Prostate gland (tissue), 2 donors: ENCODE measurements at regions of chr1 and their contacts with region 1.

Region 1: DNA sequence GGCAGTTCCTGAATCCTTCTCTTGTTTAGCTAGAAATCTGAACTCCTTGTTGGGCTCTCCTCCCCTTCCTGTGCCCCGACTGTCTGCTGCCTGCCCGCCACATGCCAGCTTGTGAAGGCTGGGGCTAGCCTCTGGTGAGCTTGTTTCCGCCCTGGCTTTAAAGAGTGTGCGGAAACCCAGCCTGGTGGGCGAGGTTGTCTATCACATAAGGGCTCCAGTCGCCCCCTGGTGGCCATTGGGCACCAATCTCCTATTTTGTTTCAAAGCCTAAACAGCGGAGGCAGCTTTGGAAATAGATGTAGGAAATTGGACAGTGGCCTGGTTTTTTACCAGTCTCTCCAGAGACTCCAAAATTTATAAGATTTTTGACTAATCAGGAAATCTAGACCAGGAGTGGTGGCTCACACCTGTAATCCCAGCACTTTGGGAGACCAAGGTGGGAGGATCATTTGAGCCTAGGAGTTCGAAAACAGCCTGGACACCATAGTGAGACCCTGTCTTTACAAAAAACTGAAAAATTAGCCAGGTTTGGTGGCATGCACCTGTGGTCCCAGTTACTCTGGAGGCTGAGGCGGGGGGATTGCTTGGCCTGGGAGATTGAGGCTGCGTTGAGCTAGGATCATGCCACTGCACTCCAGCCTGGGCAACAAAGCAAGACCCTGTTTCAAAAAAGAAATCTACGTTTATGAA is 9.8 kb downstream of the ATP8B2 start:
- DNase-seq: peak; percentile 84
- H3K4me3 ChIP-seq: no peak overlapping the region
- H3K27ac ChIP-seq: peak overlapping the region; percentile 72 to 96
- H3K4me1 ChIP-seq: peaks cover 8% of the 10 kb centered on the region
- H3K27me3 ChIP-seq: no peaks in the 10 kb centered on the region
- CTCF ChIP-seq: peak; percentile 60 to 91 (median 88)
- POLR2A ChIP-seq: no peak

Region 2: DNA sequence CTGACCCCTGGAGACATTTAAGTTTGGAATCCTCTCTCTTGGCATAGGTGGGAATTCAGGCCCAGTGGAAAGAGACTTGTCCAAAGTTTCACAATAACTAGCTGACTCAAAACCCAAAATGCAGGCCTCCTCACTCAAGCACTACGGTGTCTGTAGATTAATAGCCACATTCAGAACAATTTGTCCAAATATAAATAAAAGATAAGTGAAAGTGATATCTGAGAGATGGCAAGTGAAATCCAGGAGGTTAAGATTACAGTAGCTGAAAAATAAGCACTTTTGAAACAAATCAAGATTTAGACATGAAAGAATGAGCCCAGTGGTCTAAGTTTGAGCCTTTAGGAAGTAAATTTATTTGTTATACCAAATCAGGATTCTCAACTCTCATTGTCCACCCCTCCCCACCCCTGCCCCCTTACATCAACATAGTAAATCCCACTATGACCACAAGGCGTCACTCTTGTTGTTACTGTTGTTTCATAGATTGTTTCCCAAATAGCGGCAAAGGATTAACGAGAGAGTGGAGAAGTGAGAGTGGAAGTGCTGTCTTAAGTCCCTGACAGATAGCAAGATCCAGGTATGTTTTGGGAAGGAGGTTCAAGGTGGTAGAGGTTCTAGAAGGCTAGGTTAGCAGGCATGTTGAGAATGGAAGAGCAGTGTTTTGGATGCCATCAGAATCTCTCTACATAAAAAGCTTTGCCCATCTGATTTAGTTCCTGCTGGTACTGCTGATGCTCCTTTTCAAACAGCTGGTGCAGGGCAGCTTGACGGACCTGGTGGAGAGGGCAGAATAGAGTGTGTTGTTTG is 136.2 kb before region 1 on chr1:
- intact Hi-C with region 1: loop called (anchors 10 kb)
- DNase-seq: peak; percentile 40
- H3K4me3 ChIP-seq: no peak overlapping the region
- H3K27ac ChIP-seq: peak overlapping the region; percentile 15 to 45
- H3K4me1 ChIP-seq: no peaks in the 10 kb centered on the region
- H3K27me3 ChIP-seq: no peaks in the 10 kb centered on the region
- CTCF ChIP-seq: peak; percentile 13 to 50 (median 38)
- POLR2A ChIP-seq: no peak